Activated CD4-positive, alpha-beta T cell treated with anti-CD3 and anti-CD28 coated beads for 36 hours (primary cell): ENCODE measurements at regions of chr7 and their contacts with region 1.

Region 1: GRCh38 chr7:150567169-150567568 is at the start of gene GIMAP4:
- DNase-seq: peak; percentile 45
- ATAC-seq: peak; percentile 50
- H3K4me3 Mint-ChIP-seq: peak within 1 kb of the TSS; percentile 89
- H3K27ac Mint-ChIP-seq: peak within 1 kb of the TSS; percentile 99
- H3K4me1 Mint-ChIP-seq: peaks cover 67% of the 10 kb centered on the region
- H3K27me3 Mint-ChIP-seq: no peaks in the 10 kb centered on the region
- total RNA-seq, gene GIMAP4: 109 to 135 TPM

Region 2: GRCh38 chr7:150368096-150368883 is 198.9 kb before region 1 on chr7 and contains the start of gene REPIN1:
- CTCF ChIA-PET with region 1: no interaction called
- POLR2A ChIA-PET with region 1: no interaction called
- intact Hi-C with region 1: loop called in 1 of 2 experiments (anchors 5 kb)
- DNase-seq: peak; percentile 88
- ATAC-seq: peak; percentile 63
- H3K4me3 Mint-ChIP-seq: peak within 1 kb of the TSS; percentile 90
- H3K27ac Mint-ChIP-seq: peak within 1 kb of the TSS; percentile 97
- H3K4me1 Mint-ChIP-seq: peaks cover 37% of the 10 kb centered on the region
- H3K27me3 Mint-ChIP-seq: no peaks in the 10 kb centered on the region
- total RNA-seq, gene REPIN1: 48.2 to 55.6 TPM

Region 3: GRCh38 chr7:150404805-150405583 is 162.2 kb before region 1 on chr7:
- CTCF ChIA-PET with region 1: no interaction called
- POLR2A ChIA-PET with region 1: no interaction called
- intact Hi-C with region 1: no loop called
- DNase-seq: peak; percentile 85
- ATAC-seq: peak; percentile 74
- H3K4me3 Mint-ChIP-seq: peak overlapping the region; percentile 90
- H3K27ac Mint-ChIP-seq: peak overlapping the region; percentile 91
- H3K4me1 Mint-ChIP-seq: peaks cover 49% of the 10 kb centered on the region
- H3K27me3 Mint-ChIP-seq: no peaks in the 10 kb centered on the region

Region 4: GRCh38 chr7:150514748-150515222 is 52.4 kb before region 1 on chr7 and contains the start of gene GIMAP7:
- CTCF ChIA-PET with region 1: interaction called, 3 read pairs
- POLR2A ChIA-PET with region 1: no interaction called
- intact Hi-C with region 1: loop called (anchors 2 kb)
- DNase-seq: peak; percentile 73
- ATAC-seq: peak; percentile 81
- H3K4me3 Mint-ChIP-seq: peak within 1 kb of the TSS; percentile 96
- H3K27ac Mint-ChIP-seq: peak within 1 kb of the TSS; percentile 99
- H3K4me1 Mint-ChIP-seq: peaks cover 48% of the 10 kb centered on the region
- H3K27me3 Mint-ChIP-seq: no peaks in the 10 kb centered on the region
- total RNA-seq, gene GIMAP7: 34.5 to 36.9 TPM

Region 5: GRCh38 chr7:150556521-150557138 is 10.5 kb before region 1 on chr7:
- CTCF ChIA-PET with region 1: interaction called, 13 read pairs
- POLR2A ChIA-PET with region 1: interaction called, 3 read pairs
- intact Hi-C with region 1: no loop called
- DNase-seq: no peak
- ATAC-seq: peak; percentile 70
- H3K4me3 Mint-ChIP-seq: peak overlapping the region; percentile 9
- H3K27ac Mint-ChIP-seq: peak overlapping the region; percentile 91
- H3K4me1 Mint-ChIP-seq: peaks cover 71% of the 10 kb centered on the region
- H3K27me3 Mint-ChIP-seq: no peaks in the 10 kb centered on the region

Region 6: GRCh38 chr7:150631866-150632864 is 65.0 kb after region 1 on chr7 and contains the start of gene GIMAP6:
- CTCF ChIA-PET with region 1: no interaction called
- POLR2A ChIA-PET with region 1: no interaction called
- intact Hi-C with region 1: loop called in 1 of 2 experiments (anchors 5 kb)
- DNase-seq: peak; percentile 62
- ATAC-seq: peak; percentile 69
- H3K4me3 Mint-ChIP-seq: peak within 1 kb of the TSS; percentile 95
- H3K27ac Mint-ChIP-seq: peak within 1 kb of the TSS; percentile 97
- H3K4me1 Mint-ChIP-seq: peaks cover 65% of the 10 kb centered on the region
- H3K27me3 Mint-ChIP-seq: no peaks in the 10 kb centered on the region
- total RNA-seq, gene GIMAP6: 21.6 to 25.4 TPM

Region 7: DNA sequence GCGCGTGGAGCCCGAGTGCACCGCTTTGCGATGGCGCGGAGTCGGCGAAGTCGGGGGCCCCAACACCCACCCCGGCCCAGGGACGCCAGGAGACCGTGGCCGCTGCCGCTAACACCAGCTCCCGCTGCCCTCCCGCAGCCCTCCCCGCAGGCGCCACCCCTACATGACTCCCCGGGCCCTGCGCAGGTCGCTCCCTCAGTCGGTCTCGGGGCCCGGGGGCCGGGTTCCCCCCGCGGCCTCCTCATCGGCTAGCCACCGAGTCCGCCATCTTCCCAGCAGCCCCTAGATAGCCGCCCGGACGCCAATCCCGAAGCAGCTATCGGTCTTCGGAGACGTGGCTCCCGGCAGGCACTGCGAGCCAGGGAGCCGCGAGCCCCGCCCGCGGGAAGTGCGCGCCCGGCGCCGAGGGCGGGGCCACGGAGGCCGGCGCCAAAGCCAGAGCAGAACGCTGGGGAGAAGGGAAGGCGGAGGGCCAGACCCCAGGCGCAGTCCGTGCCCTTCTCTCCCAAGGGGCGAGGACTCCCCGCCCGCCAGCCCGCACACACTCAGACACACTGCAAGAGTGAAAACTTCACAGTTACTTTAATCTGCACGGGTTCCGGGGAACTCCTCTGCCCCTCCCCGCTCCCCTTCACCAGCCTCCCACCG is 513.5 kb after region 1 on chr7 and contains the start of gene FASTK:
- CTCF ChIA-PET with region 1: no interaction called
- POLR2A ChIA-PET with region 1: no interaction called
- intact Hi-C with region 1: loop called in 1 of 2 experiments (anchors 5 kb)
- DNase-seq: peak; percentile 94
- ATAC-seq: peak; percentile 89
- H3K4me3 Mint-ChIP-seq: peak within 1 kb of the TSS; percentile 94
- H3K27ac Mint-ChIP-seq: peak within 1 kb of the TSS; percentile 91
- H3K4me1 Mint-ChIP-seq: peaks cover 43% of the 10 kb centered on the region
- H3K27me3 Mint-ChIP-seq: peaks cover 7% of the 10 kb centered on the region
- total RNA-seq, gene FASTK: 56.6 to 56.7 TPM

Region 8: DNA sequence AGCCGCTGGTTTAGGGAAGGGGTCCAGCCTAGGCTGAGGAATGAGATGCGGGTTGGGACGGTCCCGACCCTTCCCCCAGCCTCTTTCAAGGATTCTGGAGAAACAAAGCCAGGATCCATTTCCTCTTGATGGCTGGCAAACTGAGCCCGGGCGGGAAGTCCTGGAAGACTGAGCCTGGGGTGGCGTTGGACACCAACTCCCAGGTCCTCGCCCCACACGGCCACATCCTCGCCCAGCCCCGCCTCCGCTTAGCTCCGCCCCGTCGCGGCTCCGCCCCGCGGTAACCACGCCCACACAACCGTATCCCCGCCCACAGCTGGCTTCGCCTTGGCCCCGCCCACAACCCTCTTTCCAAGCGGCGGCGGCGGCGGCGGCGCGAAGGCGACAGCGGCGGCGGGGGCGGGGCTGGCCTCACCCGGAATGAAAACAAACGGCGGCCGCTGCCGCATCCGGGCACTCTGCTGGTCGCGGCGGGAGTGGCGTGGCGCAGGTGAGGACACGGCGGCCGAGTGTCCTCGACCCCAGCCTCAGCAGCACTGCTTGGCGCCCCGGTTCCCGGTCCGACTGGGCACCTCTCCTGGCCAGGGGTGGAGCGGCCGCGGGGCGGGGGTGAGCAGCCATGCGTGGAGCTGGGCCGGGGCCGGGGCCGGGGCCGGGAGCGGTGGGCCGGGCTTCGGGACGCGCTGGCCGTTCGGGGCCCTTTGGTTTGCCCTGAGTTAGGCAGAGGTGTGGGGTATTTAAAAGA is 774.4 kb after region 1 on chr7 and contains the start of gene NUB1:
- CTCF ChIA-PET with region 1: no interaction called
- POLR2A ChIA-PET with region 1: no interaction called
- intact Hi-C with region 1: loop called in 1 of 2 experiments (anchors 10 kb)
- DNase-seq: peak; percentile 96
- ATAC-seq: peak; percentile 82
- H3K4me3 Mint-ChIP-seq: peak within 1 kb of the TSS; percentile 76
- H3K27ac Mint-ChIP-seq: peak within 1 kb of the TSS; percentile 78
- H3K4me1 Mint-ChIP-seq: peaks cover 46% of the 10 kb centered on the region
- H3K27me3 Mint-ChIP-seq: no peaks in the 10 kb centered on the region
- total RNA-seq, gene NUB1: 51.4 to 70.4 TPM